Lower leg skin (tissue), 4 donors: ENCODE measurements at regions of chr9 and their contacts with region 1.

Region 1: GRCh38 chr9:104494808-104495207 is 9.3 kb upstream of the OR13F1 start:
- DNase-seq: no peak
- H3K4me3 ChIP-seq: no peak overlapping the region
- CTCF ChIP-seq: no peak
- POLR2A ChIP-seq: no peak

Region 2: DNA sequence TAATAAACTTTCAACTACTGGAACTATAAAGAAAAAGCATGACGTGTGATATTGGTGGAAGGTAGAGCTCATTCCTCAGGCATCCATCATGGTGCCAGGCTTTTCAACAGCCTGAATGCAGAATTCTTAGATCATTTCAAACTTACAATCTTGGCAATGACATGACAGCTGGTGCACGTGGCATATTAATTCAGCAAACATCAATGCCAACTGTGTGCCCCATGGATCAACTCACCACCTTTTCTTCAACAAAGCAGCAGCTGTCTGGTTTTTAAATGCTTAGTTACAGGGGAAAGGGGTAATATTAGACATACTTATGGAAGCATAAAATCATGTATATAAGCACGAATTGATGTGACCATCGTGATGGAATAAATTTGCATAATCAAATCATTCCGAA is 46.8 kb before region 1 on chr9:
- intact Hi-C with region 1: no loop called
- DNase-seq: no peak
- H3K4me3 ChIP-seq: no peak overlapping the region
- CTCF ChIP-seq: no peak
- POLR2A ChIP-seq: no peak

Region 3: DNA sequence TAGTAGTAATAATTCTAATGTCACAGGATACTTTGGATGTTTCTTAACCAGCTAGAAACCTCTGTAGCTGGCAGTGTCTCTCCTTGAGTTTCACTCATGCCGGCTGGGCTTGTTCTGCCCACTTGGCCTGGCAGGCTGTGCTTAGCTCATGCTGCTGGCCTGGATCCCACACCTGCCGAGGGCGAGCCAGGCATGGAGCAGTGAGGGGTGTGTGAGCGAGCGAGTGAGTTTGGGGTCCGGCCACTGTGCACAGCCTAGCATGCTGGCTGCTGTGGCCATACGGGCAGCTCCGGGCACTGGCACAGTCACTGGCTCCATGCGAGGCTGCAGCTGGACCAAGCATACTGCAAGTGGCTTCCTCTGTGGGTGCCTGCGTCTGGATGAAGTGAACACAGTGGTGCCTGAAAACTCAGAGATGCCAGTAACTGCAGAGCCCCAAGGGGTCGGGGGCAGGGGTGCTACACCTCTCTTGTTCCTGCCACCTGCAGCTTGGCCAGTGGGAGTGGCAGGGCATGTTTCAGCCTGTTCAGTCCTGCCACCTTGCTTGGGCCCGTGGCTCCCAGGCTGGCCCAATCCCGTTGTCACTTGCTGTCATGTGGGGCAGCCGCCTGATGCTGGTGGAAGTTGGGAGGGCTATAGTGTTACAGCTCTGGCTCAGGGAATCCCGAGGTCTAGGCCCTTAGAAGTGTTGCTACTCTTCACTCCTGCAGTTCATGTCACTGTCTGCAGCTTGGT is 962.9 kb after region 1 on chr9:
- intact Hi-C with region 1: loop called (anchors 5 kb)
- DNase-seq: no peak
- H3K4me3 ChIP-seq: no peak overlapping the region
- CTCF ChIP-seq: no peak
- POLR2A ChIP-seq: no peak